Sciatic nerve (tissue), 2 donors: ENCODE measurements at regions of chrX and their contacts with region 1.

Region 1: GRCh38 chrX:24054182-24055042 is at the start of gene EIF2S3:
- DNase-seq: peak; percentile 94
- ATAC-seq: peak; percentile 98
- total RNA-seq, gene EIF2S3: 153 TPM

Region 2: DNA sequence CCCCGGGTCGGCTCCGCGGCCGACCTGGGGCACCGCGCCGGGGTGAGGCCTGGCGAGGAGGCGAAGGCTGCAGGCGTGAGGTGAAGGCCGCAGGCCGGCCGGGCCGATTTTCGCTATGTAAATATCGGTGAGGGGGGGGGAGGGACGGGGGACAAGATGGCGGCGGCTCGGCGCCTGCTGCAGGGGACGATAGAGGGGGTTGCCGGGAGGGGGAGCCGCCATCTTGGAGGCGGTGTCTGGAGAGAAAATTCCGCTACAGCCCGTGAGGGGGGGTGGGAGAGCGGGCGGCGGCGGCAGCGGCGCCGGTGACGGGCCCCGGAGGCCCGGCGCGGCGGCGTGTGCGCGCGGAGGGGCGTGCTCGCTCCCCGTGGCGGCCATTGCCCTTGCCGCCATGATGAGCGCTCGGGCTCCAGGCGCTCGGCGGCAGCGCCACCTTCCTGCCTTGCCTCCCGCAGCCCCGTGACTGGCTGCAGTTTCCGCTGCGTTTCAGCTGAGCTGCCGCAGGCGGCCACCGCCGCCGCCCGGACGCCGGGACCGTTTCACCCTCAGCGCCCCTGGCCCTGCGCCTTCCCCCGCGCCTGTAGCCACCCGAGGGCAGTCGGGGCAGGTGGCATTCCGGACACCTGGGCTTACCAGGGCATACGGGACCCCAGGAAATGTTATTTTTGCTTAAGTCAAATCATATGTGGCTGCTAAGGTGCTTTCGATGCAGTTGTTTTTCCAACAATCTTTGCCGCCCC is 95.8 kb after region 1 on chrX:
- intact Hi-C with region 1: loop called (anchors 10 kb)
- DNase-seq: peak; percentile 95
- ATAC-seq: peak; percentile 93